ENCODE measurements at regions of chr17 and their contacts with region 1.

Region 1: GRCh38 chr17:29369831-29370735 is 20.1 kb upstream of the TAOK1 start:
- DNase-seq: peak; percentile 27 to 82 (median 60)

Region 2: DNA sequence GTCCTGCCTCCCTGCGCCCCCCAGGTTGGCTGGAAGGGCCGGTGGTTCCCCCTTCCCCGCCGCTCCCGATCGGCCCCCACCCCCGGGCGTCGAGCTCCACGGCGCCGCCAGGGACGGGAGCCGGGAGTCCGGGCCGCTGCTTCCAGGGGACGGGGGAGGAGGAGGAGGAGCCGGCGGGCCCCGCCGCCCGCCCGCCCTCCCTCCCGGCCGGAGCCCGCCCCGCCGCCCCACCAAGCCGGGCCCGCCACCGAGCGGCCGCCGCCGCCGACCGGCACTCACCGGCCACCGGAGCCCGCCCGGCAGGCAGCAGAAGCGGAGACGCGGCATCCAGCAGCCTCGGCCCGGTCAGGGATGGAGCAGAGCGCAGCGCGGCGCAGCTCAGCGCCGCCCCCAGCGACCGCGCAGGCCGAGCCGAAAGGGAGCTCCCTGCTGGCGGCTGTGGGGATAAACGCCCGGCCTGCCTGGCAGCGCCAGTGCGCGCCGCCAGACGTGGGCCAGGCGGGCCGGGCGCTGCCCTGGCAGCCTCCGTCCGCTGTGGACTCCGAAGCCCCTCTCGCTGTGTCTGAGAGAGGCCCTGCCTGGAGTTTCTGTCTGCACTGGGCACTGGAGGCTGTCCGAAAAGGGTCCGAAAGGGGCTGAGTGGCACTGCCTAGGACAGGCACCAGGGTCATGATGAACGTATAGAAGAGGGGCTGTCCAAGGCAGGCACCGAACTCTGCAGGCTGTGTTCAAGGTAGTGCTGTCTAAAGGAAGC is 189.9 kb before region 1 on chr17 and contains the start of gene MYO18A:
- intact Hi-C with region 1: no loop called
- DNase-seq: peak in 41 of 42 donors; percentile 60 to 93 (median 86)

Region 3: GRCh38 chr17:29252101-29252866 is 117.8 kb before region 1 on chr17:
- intact Hi-C with region 1: no loop called
- DNase-seq: no peak

Region 4: DNA sequence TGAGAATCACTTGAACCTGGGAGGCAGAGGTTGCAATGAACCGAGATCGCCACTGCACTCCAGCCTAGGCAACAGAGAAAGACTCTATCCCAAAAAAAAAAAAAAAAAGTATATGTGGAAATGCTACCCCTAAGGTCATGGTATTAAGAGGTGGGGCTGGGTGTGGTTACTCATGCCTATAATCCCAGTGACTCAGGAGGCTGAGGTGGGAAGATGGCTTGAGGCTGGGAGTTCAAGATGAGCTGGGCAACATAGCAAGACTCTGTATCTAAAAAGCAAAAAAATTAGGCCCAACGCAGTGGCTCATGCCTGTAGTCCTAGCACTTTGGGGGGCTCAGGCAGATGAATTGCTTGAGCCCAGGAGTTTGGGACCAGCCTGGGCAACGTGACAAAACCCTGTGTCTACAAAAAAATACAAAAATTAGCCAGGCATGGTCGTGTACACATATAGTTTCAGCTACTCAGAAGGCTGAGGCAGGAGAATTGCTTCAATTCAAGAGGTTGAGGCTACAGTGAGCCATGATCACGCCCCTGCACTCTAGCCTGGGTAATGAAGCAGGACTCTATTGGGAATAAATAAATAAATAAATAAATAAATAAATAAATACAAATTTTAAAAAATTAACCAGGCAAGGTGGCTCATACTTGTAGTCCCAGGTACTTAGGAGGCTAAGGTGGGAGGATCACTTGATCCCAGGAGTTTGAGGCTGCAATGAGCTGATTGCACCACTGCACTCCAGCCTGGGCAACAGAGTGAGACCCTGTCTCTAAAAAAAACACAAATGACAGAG is 43.9 kb before region 1 on chr17:
- intact Hi-C with region 1: no loop called
- DNase-seq: no peak

Region 5: GRCh38 chr17:29533976-29534375 is 163.9 kb after region 1 on chr17:
- intact Hi-C with region 1: loop called (anchors 5 kb)
- DNase-seq: peak in 21 of 42 donors; percentile 5 to 59 (median 26)

Region 6: DNA sequence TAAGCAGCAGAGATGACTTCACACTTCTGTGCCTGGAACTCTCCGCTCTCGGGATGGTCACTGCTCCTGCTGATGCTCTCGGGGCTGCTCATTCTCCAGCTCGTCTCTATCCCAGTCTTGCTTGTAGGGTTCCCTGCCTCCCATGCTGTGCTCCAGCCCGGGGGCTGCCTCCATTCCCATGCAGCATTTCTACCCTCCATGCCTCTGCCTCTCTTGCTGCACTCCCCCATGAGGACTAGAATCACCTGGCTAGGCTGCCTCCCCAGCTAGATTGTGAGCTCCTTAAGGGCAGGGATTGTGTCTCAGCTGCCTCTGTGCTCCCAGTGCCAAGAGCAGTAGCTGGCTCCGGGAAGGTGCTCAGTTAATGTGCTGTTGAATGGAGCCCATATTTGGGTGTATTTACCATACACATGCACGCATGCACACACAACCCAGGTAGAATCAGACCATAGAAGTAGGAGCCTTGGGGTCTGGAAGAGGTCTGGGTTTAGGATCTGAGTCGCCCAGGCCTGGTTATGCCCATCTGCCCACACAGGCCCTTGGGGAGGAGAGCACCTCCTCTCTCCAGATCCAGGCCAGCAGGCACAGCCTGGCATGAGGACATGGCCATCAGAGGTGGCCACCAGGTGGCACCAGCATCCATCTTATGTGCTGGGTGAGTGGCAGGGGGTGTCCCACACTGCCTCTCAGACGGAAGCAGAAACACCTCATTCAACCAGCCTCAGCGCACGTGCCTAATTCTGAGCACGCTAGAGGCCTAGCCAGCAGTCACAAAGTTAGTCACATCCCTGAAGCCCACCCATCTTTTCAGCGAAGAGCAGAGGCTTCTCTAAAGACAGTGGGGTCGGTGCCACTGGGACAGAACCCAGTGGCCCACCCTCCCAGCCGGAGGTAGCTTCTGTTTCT is 210.0 kb after region 1 on chr17:
- intact Hi-C with region 1: loop called (anchors 10 kb)
- DNase-seq: peak; percentile 83 to 97 (median 92)